HepG2 (cell line): ENCODE measurements at regions of chr16 and their contacts with region 1.

Region 1: GRCh38 chr16:67470359-67470758 is 10.6 kb downstream of the ATP6V0D1 start:
- DNase-seq: no peak
- ATAC-seq: no peak
- H3K4me3 ChIP-seq: no peak overlapping the region
- H3K27ac ChIP-seq: no peak overlapping the region
- H3K4me1 ChIP-seq: peaks cover 4% of the 10 kb centered on the region
- H3K27me3 ChIP-seq: no peaks in the 10 kb centered on the region
- CTCF ChIP-seq: no peak
- EP300 ChIP-seq: no peak
- POLR2A ChIP-seq: no peak
- RAD21 ChIP-seq: no peak

Region 2: DNA sequence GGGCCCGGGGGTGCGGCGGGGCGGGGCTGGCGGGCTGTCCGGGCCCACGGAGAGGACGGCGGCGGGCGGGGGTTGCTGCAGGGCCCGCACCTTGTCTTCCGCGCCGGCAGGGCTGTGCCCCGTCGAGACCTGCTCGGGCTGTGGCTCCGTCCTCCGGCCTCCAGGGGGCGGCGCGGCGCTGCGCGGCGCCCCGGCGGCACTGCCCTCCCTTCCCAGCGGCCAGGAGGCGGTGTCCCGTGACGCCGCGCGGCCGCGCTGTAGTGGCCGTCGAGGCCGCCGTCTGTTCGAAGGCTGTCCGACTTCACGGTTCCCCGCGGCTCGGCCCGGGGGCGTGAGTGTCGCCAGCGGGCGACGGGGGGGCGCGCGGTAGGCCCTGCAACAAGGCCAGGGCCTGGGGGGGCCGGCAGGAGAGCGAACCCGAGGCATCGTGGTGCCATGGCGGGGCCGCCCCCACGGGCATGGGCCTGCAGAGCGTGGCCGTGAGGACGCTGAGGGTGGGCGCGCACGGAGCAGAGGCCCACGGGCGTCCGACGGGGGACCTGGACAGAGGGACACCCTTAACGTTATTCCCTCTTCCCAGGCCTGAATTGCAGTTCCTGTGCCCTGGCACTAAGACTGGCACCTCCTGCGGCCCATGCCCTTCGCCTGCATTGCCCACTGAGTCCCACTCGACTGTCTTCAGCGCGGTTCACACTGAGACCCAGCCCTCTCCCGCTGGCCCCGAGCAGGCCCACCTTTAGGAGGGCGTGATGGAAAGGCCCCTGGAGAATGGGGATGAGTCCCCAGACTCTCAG is 190.9 kb before region 1 on chr16 and contains the start of gene PLEKHG4:
- CTCF ChIA-PET with region 1: no interaction called
- POLR2A ChIA-PET with region 1: no interaction called
- in situ Hi-C with region 1: no loop called
- intact Hi-C with region 1: loop called (anchors 5 kb)
- DNase-seq: peak; percentile 69
- ATAC-seq: peak; percentile 95
- H3K4me3 ChIP-seq: peak within 1 kb of the TSS; percentile 57 to 89 (median 67)
- H3K27ac ChIP-seq: peak within 1 kb of the TSS; percentile 41
- H3K4me1 ChIP-seq: peaks cover 28% of the 10 kb centered on the region
- H3K27me3 ChIP-seq: no peaks in the 10 kb centered on the region
- CTCF ChIP-seq: peak; percentile 71; the same call in 1 of the 2 replicates
- EP300 ChIP-seq: no peak
- POLR2A ChIP-seq: peak; percentile 40 to 77; a peak in 3 of 4 replicates
- RAD21 ChIP-seq: peak; percentile 94
- total RNA-seq, gene PLEKHG4: 9.0 and 13.6 TPM in 2 replicates